SK-N-SH (cell line): ENCODE measurements at regions of chr11 and their contacts with region 1.

Region 1: DNA sequence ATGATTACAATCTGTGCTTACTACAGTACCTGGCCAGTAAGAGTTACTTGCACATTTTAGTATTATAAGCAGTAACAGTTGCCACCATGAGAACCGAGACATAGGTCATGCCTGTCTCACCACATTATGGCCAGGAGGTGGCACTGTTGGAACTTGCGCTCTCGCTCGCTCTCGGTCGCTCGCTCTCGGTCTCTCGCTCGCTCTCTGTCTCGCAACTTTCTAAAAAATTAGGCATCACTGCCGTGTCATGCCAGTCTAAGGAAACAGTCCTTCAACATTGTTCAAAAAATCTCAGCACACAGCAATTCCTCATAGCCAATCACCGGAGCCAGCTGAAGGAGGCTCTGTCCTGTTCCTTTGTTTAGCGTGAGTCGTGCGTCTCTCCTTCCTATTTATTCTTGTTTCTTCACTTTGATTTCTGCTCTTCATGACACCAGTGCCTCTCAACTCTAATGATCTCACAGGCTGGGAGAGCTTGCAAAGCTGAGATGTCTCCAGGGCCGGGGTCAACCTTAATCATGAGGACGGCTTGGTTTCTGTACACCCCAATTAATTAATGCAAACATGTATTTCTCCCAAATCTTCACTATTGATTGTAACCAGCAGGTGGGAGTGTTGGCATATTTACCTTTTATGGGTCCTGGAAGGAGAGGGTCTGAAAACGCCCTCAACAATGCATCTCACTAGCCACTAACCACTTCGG is 6.3 kb upstream of the ADAMTS8 start:
- DNase-seq: peak; percentile 78
- H3K4me3 ChIP-seq: peak overlapping the region; percentile 70 to 76
- H3K27ac ChIP-seq: peak overlapping the region; percentile 3 to 68; a peak in 2 of 4 replicates
- H3K4me1 ChIP-seq: peaks cover 0 to 6% of the 10 kb centered on the region in 2 experiments; a peak in 2 of 4 replicates
- H3K27me3 ChIP-seq: peaks cover 9% of the 10 kb centered on the region
- CTCF ChIP-seq: peak; percentile 76
- EP300 ChIP-seq: no peak
- RAD21 ChIP-seq: peak; percentile 91

Region 2: GRCh38 chr11:130330101-130330684 is 104.5 kb before region 1 on chr11:
- CTCF ChIA-PET with region 1: no interaction called
- POLR2A ChIA-PET with region 1: no interaction called
- DNase-seq: peak; percentile 25
- H3K4me3 ChIP-seq: no peak overlapping the region
- H3K27ac ChIP-seq: no peak overlapping the region
- H3K4me1 ChIP-seq: no peaks in the 10 kb centered on the region
- H3K27me3 ChIP-seq: no peaks in the 10 kb centered on the region
- CTCF ChIP-seq: no peak
- EP300 ChIP-seq: no peak
- RAD21 ChIP-seq: no peak

Region 3: DNA sequence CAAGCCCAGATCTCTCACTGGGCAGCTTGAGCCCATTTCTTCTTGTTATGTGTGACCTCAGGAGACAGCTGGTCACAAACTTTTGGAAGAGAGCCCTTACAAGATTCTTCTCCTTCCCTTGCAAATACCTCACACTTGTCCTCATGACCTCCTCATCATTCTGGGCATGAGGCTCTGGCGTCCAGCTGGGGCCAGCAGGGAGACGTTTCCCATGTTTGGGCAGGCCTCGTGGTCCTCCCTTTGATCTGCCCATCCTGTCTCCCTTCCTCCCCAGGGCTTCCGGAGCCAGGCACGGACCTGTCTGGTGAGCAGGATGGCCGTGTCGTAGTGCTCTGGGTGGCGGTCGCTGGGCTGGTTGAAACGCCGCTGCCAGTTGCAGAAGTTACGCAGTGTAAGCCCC is 15.9 kb before region 1 on chr11:
- CTCF ChIA-PET with region 1: interaction called, 16 read pairs
- POLR2A ChIA-PET with region 1: no interaction called
- DNase-seq: no peak
- H3K4me3 ChIP-seq: no peak overlapping the region
- H3K27ac ChIP-seq: no peak overlapping the region
- H3K4me1 ChIP-seq: no peaks in the 10 kb centered on the region
- H3K27me3 ChIP-seq: peaks cover 10% of the 10 kb centered on the region; the same call in 1 of the 2 replicates
- CTCF ChIP-seq: no peak
- EP300 ChIP-seq: no peak
- RAD21 ChIP-seq: no peak

Region 4: GRCh38 chr11:130827451-130828377 is 393.0 kb after region 1 on chr11:
- CTCF ChIA-PET with region 1: interaction called, 27 read pairs
- POLR2A ChIA-PET with region 1: no interaction called
- DNase-seq: peak; percentile 53
- H3K4me3 ChIP-seq: no peak overlapping the region
- H3K27ac ChIP-seq: peak overlapping the region in 1 of 2 experiments; percentile 54; a peak in 2 of 4 replicates
- H3K4me1 ChIP-seq: peaks cover 8 to 13% of the 10 kb centered on the region in 2 experiments
- H3K27me3 ChIP-seq: no peaks in the 10 kb centered on the region
- CTCF ChIP-seq: peak; percentile 72
- EP300 ChIP-seq: no peak
- RAD21 ChIP-seq: peak; percentile 64

Region 5: DNA sequence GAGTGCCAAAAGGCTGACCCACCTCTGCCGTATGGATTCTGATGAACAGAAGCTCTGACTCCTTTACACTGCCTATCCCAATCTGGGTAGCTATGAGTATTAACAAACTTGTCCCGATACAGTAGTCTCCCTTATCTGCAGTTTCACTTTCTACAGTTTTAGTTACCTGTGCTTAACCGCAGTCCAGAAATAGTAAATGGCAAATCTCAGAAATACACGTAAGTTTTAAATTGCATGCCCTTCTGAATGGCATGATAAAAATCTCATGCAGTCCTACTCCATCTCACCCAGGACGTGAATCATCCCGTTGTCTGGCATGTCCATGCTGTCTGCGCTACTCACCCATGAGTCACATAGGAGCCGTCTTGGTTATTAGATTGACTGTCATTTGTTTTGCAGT is 412.8 kb after region 1 on chr11:
- CTCF ChIA-PET with region 1: interaction called, 11 read pairs
- POLR2A ChIA-PET with region 1: no interaction called
- DNase-seq: no peak
- H3K4me3 ChIP-seq: peak overlapping the region in 1 of 2 experiments; percentile 27; a peak in 2 of 4 replicates
- H3K27ac ChIP-seq: peak overlapping the region; percentile 43 to 75; a peak in 3 of 4 replicates
- H3K4me1 ChIP-seq: peaks cover 0 to 28% of the 10 kb centered on the region in 2 experiments; a peak in 2 of 4 replicates
- H3K27me3 ChIP-seq: no peaks in the 10 kb centered on the region
- CTCF ChIP-seq: no peak
- EP300 ChIP-seq: peak in 1 of 2 experiments; percentile 91; a peak in 2 of 4 replicates
- RAD21 ChIP-seq: no peak

Region 6: GRCh38 chr11:130894322-130895025 is 459.8 kb after region 1 on chr11:
- CTCF ChIA-PET with region 1: interaction called, 68 read pairs
- POLR2A ChIA-PET with region 1: no interaction called
- DNase-seq: peak; percentile 57
- H3K4me3 ChIP-seq: no peak overlapping the region; a peak in 1 of 4 replicates
- H3K27ac ChIP-seq: no peak overlapping the region
- H3K4me1 ChIP-seq: no peaks in the 10 kb centered on the region; a peak in 1 of 4 replicates
- H3K27me3 ChIP-seq: no peaks in the 10 kb centered on the region
- CTCF ChIP-seq: peak; percentile 95
- EP300 ChIP-seq: no peak
- RAD21 ChIP-seq: peak; percentile 69